Right ventricle myocardium superior (tissue), 1 donor: ENCODE measurements at regions of chr4 and their contacts with region 1.

Region 1: DNA sequence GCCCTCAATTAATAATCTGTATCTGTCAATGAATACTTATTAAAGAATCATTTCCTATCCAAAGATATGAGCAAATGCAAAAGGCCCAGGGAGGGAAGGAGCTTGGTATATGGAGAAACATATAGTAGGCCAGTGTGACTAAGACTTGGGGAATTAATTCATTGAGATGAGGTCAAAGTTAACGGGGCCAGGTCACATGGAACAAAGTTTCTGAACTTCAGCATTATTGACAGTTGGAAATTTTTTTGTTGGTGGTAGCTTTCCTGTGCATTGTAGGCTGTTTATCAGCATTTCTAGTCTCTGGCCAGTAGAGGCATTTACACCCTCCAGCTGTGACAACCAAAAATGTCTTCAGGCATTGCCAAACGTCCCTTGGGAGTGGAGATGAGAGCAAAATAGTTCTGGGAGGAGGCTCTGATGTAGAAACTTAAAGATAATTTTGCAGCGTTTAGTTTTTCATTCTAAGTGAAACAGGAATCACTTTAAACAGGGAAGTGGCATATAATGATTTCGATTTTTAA is 202.0 kb downstream of the SLC4A4 start:
- DNase-seq: no peak
- ATAC-seq: no peak

Region 2: GRCh38 chr4:70979445-70980008 is 561.3 kb before region 1 on chr4:
- intact Hi-C with region 1: no loop called
- DNase-seq: no peak
- ATAC-seq: no peak

Region 3: GRCh38 chr4:71195924-71196323 is 344.9 kb before region 1 on chr4:
- intact Hi-C with region 1: loop called (anchors 10 kb)
- DNase-seq: no peak
- ATAC-seq: no peak

Region 4: GRCh38 chr4:71595576-71596108 is 54.8 kb after region 1 on chr4:
- intact Hi-C with region 1: no loop called
- DNase-seq: no peak
- ATAC-seq: no peak

Region 5: GRCh38 chr4:71872767-71873415 is 332.1 kb after region 1 on chr4:
- intact Hi-C with region 1: no loop called
- DNase-seq: no peak
- ATAC-seq: no peak

Region 6: GRCh38 chr4:73208376-73208775 is 1667.6 kb after region 1 on chr4:
- intact Hi-C with region 1: no loop called
- DNase-seq: no peak
- ATAC-seq: no peak